Naive thymus-derived CD4-positive, alpha-beta T cell (primary cell): ENCODE measurements at regions of chr17 and their contacts with region 1.

Region 1: DNA sequence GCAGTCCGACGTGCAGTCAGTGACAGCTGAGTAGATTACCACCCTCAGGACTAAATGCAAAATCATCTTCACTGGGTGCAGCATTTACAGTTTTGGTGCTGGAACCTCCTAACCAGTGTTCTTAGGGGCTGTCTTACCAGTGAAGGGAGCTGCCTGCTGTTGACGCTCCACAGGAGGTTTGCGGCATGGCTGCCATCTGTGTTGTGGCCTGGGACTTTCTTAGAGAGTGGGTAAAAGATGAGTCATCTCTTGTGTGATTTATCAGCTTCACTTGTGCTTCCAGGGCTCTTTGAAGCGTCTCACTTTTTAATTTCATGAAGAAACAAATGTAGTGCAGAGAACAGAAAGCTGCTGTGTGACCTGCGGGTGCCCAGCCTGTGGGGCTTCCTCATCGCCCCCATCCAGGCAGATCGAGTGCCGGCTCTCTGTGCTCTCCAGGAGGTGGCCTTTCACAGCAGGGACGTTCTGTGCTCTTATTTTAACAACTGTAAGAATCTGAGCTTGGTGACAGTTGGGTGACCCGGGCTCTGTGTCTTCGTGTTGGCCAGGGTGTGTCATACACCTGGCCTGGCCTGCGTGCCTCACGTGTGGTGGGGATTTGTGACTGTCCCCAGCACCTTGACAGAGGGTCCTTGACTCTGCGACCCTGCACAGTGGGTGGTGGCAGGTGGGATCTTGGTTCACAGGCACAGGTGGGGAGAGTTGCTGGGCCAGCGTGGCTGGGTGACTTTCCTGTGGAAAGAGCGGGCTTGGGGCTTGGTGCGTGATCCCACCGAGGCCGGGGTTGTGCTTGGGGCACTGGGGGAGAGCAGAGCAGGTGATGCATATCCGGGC is 24.3 kb upstream of the ZNF750 start:
- DNase-seq: peak; percentile 42 to 95 (median 93)
- ATAC-seq: peak; percentile 94
- H3K4me3 ChIP-seq: peak overlapping the region; percentile 54
- H3K4me3 Mint-ChIP-seq: peak overlapping the region; percentile 73 to 88 (median 83)
- H3K27ac ChIP-seq: peak overlapping the region; percentile 72
- H3K27ac Mint-ChIP-seq: peak overlapping the region; percentile 63 to 98 (median 97)
- H3K4me1 ChIP-seq: peaks cover 49 to 54% of the 10 kb centered on the region in 2 donors
- H3K4me1 Mint-ChIP-seq: peaks cover 38 to 73% (median 64%) of the 10 kb centered on the region in 7 donors
- H3K27me3 ChIP-seq: no peaks in the 10 kb centered on the region
- H3K27me3 Mint-ChIP-seq: no peaks in the 10 kb centered on the region

Region 2: DNA sequence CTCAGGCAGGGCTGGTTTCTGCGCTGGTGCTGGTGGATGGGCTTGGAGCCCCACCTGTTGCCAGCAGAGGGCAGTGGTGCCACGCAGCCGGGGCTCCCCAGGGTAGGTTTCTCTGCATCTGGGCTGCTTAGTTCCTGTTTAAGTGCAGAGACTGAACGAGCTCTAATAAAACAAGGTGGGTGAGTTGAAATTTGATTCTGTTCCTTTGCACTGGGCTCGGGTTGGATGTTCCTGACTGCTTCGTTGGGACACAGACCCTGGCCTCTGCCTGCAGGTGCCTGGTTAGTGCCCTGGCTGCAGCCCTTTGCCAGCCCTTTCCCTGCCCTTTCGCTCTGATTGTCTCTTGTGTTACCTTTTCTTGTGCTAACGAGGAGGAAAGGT is 82.3 kb before region 1 on chr17:
- CTCF ChIA-PET with region 1: interaction called, 7 read pairs
- POLR2A ChIA-PET with region 1: interaction called, 3 read pairs
- intact Hi-C with region 1: loop called (anchors 1 to 2 kb)
- DNase-seq: peak; percentile 71 to 90 (median 84)
- ATAC-seq: peak; percentile 99
- H3K4me3 ChIP-seq: no peak overlapping the region
- H3K4me3 Mint-ChIP-seq: no peak overlapping the region
- H3K27ac ChIP-seq: no peak overlapping the region
- H3K27ac Mint-ChIP-seq: peak overlapping the region in 6 of 9 donors; percentile 11 to 74 (median 46)
- H3K4me1 ChIP-seq: no peaks in the 10 kb centered on the region
- H3K4me1 Mint-ChIP-seq: peaks cover 5 to 18% (median 12%) of the 10 kb centered on the region in 7 donors
- H3K27me3 ChIP-seq: no peaks in the 10 kb centered on the region
- H3K27me3 Mint-ChIP-seq: no peaks in the 10 kb centered on the region

Region 3: DNA sequence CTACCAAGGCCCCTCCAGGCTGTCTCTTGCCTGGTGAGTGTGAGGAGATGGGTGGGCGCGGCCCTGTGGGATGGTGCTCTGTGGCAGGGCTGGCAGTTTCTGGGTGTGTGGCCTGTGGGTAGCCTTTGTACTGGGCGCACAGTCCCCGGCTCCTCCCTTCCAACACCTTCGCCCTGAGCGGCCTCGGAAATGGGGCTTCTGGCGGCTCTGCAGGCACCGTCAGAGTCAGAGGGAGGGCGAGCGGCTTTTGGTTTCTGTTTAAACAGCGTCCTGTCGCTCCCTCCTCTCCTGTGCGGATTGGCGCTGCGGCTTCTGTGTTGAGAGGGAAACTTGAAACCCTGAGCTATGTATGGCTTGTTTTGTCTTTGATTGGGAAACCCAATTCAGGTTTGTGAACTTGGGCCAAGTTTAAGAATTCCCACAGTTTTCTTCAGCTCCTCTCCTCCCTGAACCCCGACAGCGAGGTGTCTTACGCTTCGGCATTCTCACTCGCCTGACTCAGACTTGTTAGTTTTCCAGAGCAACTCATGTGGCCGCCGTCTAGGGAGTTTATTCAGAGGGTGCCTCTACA is 16.1 kb before region 1 on chr17:
- CTCF ChIA-PET with region 1: interaction called, 4 read pairs
- POLR2A ChIA-PET with region 1: interaction called, 11 read pairs
- intact Hi-C with region 1: loop called in 1 of 2 experiments (anchors 2 kb)
- DNase-seq: peak in 3 of 9 donors; percentile 18 to 36 (median 19)
- ATAC-seq: peak; percentile 87
- H3K4me3 ChIP-seq: no peak overlapping the region
- H3K4me3 Mint-ChIP-seq: peak overlapping the region in 6 of 10 donors; percentile 16 to 77 (median 46)
- H3K27ac ChIP-seq: no peak overlapping the region
- H3K27ac Mint-ChIP-seq: peak overlapping the region in 4 of 9 donors; percentile 53 to 81 (median 68)
- H3K4me1 ChIP-seq: no peaks in the 10 kb centered on the region
- H3K4me1 Mint-ChIP-seq: peaks cover 6 to 18% (median 14%) of the 10 kb centered on the region in 7 donors
- H3K27me3 ChIP-seq: no peaks in the 10 kb centered on the region
- H3K27me3 Mint-ChIP-seq: no peaks in the 10 kb centered on the region

Region 4: DNA sequence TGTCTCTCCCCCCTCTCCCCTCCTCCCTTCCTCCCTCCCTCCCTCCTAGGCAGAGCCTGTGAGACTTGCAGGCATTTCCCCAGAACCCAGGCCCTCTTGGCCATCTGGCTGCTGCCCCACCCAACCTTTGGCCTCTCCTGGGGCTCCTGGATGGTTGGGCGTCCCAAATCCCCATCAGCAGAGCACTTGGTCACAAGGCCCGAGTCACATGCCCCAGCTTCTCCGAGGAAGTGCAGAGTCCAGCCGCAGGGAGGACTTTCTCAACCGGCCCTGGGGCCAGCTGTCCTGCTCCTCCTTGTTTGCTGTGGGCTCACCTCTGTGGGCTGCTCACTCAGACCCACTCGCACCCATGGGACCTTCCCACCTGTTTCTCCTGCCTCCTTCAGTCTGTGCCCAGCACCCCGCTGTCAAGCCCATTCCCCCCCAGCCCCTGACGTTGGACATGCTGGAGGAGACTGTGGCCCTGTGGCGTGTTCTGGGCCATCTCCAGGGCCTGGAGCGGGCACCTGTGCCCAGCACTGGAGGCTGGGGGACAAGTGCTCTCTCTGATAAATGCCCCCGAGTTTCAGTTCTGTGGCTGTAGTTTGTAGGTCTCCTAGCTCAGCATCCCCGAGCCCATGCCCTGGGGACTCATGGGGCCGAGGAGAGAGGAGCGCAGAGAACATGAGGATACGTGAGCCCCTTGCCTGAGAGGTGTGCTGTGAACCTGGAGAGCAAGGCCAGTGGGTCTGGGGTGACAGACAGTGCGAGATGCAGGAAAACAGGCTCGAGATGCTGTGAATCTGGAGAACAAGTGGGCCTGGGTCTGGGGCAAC is 17.9 kb after region 1 on chr17:
- CTCF ChIA-PET with region 1: interaction called, 14 read pairs
- POLR2A ChIA-PET with region 1: interaction called, 84 read pairs
- intact Hi-C with region 1: loop called (anchors 1 to 2 kb)
- DNase-seq: no peak
- ATAC-seq: no peak
- H3K4me3 ChIP-seq: peak overlapping the region; percentile 47
- H3K4me3 Mint-ChIP-seq: peak overlapping the region; percentile 81 to 99 (median 90)
- H3K27ac ChIP-seq: peak overlapping the region; percentile 75
- H3K27ac Mint-ChIP-seq: peak overlapping the region; percentile 90 to 100 (median 99)
- H3K4me1 ChIP-seq: peaks cover 51% of the 10 kb centered on the region in 2 donors
- H3K4me1 Mint-ChIP-seq: peaks cover 51 to 90% (median 78%) of the 10 kb centered on the region in 7 donors
- H3K27me3 ChIP-seq: no peaks in the 10 kb centered on the region
- H3K27me3 Mint-ChIP-seq: no peaks in the 10 kb centered on the region

Region 5: GRCh38 chr17:82917691-82918345 is 53.7 kb after region 1 on chr17:
- CTCF ChIA-PET with region 1: interaction called, 3 read pairs
- POLR2A ChIA-PET with region 1: interaction called, 3 read pairs
- intact Hi-C with region 1: loop called in 1 of 2 experiments (anchors 5 kb)
- DNase-seq: peak in 3 of 9 donors; percentile 21 to 32 (median 28)
- ATAC-seq: peak; percentile 42
- H3K4me3 ChIP-seq: no peak overlapping the region
- H3K4me3 Mint-ChIP-seq: no peak overlapping the region
- H3K27ac ChIP-seq: no peak overlapping the region
- H3K27ac Mint-ChIP-seq: no peak overlapping the region
- H3K4me1 ChIP-seq: no peaks in the 10 kb centered on the region
- H3K4me1 Mint-ChIP-seq: peaks cover 0 to 11% (median 7%) of the 10 kb centered on the region in 7 donors
- H3K27me3 ChIP-seq: no peaks in the 10 kb centered on the region
- H3K27me3 Mint-ChIP-seq: no peaks in the 10 kb centered on the region

Region 6: DNA sequence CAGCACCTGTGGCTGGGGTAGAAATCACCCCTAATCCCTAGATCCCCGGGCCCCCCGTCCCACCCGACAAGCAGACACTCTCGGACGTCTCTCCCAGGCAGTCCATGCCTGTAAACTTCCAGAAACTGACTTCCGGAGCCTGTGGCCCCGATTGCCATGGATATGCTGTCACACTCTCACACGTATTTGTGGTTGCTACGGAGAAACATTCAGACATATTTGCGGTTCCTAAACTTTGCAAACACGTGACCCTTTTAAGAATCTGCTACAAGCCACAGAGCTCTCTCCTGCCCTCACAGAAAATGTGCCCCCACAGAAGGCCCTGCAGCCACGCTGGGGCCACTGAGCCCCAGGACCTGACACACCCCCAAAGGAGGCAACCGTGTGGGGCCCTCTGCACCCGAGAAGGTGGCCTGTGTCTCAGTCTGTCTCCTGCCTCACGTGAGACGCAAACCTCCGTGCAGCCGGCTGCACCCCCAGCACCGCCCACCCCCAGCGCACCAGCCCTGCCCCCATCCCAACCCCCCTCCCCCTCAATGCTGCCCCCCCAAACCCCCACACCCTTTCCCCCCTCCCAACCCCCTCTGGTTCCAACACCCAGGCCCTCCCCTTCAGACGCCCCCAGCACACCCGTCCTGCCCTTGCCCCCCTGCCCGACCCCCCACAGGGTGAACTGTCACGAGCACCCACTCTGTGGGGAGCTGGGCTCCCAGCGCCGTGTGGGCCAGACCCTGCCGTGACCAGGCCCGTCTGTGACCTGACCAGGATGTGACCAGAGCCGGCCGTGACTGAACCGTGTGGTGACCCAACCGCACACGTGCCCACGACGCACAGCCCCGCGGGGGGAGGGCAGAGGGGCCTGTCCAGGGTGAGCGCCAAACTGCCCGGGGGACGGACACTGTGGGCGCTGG is 149.0 kb after region 1 on chr17:
- CTCF ChIA-PET with region 1: no interaction called
- POLR2A ChIA-PET with region 1: no interaction called
- intact Hi-C with region 1: no loop called
- DNase-seq: no peak
- ATAC-seq: no peak
- H3K4me3 ChIP-seq: no peak overlapping the region
- H3K4me3 Mint-ChIP-seq: no peak overlapping the region
- H3K27ac ChIP-seq: no peak overlapping the region
- H3K27ac Mint-ChIP-seq: peak overlapping the region in 1 of 9 donors; percentile 80
- H3K4me1 ChIP-seq: no peaks in the 10 kb centered on the region
- H3K4me1 Mint-ChIP-seq: peaks cover 0 to 7% (median 0%) of the 10 kb centered on the region in 7 donors
- H3K27me3 ChIP-seq: no peaks in the 10 kb centered on the region
- H3K27me3 Mint-ChIP-seq: no peaks in the 10 kb centered on the region